Left ventricle myocardium superior (tissue), 1 donor: ENCODE measurements at regions of chr19 and their contacts with region 1.

Region 1: GRCh38 chr19:36128392-36128736 is 11.5 kb upstream of the CAPNS1 start:
- DNase-seq: no peak
- ATAC-seq: peak; percentile 33

Region 2: GRCh38 chr19:36172852-36173251 is 44.5 kb after region 1 on chr19:
- intact Hi-C with region 1: loop called (anchors 5 kb)
- DNase-seq: no peak
- ATAC-seq: no peak

Region 3: GRCh38 chr19:36183245-36183628 is 54.9 kb after region 1 on chr19:
- intact Hi-C with region 1: no loop called
- DNase-seq: no peak
- ATAC-seq: peak; percentile 93

Region 4: GRCh38 chr19:36363845-36364244 is 235.5 kb after region 1 on chr19:
- intact Hi-C with region 1: no loop called
- DNase-seq: no peak
- ATAC-seq: no peak